Calu3 (cell line): ENCODE measurements at regions of chr12 and their contacts with region 1.

Region 1: GRCh38 chr12:19800884-19801283 is 361.6 kb downstream of the AEBP2 start:
- DNase-seq: no peak
- H3K4me3 Mint-ChIP-seq: no peak overlapping the region
- H3K27ac Mint-ChIP-seq: peak overlapping the region; percentile 63
- H3K4me1 Mint-ChIP-seq: peaks cover 26% of the 10 kb centered on the region
- H3K27me3 Mint-ChIP-seq: no peaks in the 10 kb centered on the region
- CTCF ChIP-seq: no peak

Region 2: DNA sequence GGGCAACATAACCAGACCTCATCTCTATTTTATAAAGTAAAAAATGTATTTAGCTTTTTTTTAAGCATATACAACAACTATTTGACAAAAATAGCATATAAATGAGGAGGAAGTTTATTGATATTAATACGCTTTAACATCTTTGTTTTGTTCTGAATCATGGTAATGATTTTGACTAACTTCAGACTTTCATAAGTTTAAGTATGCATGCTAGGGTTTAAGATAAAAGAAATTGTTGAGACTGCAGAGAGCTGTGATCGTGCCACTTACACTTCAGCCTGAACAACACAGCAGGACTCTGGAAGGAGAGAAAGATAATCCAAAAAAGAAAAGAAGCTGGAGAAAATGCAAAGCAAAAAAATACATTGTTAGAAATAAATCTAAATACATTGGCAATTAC is 449.5 kb before region 1 on chr12:
- CTCF ChIA-PET with region 1: no interaction called
- intact Hi-C with region 1: no loop called
- DNase-seq: no peak
- H3K4me3 Mint-ChIP-seq: no peak overlapping the region
- H3K27ac Mint-ChIP-seq: no peak overlapping the region
- H3K4me1 Mint-ChIP-seq: no peaks in the 10 kb centered on the region
- H3K27me3 Mint-ChIP-seq: no peaks in the 10 kb centered on the region
- CTCF ChIP-seq: no peak

Region 3: DNA sequence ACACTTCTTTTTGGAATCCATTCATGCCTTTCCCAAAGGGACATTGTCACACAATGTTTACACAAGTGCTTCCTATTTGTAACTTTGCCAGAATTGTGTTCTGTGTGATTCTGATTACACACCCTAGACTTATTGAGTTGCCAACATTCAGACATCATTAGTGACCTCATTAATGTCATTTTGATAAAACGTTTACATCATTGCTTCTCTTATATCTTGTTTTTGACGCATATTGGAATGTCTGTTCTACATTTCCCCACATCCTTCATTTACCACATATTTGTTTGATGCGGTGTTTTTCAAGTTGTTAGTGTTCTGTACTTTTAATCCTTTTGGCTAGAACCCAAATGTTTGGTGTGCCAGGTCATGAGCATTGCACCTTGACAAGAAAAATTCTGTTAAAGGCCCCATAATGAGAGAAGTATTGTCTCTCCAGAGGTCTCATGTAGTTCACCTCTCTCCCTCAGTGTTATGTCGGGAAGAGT is 56.1 kb before region 1 on chr12:
- CTCF ChIA-PET with region 1: interaction called, 3 read pairs
- intact Hi-C with region 1: loop called (anchors 5 kb)
- DNase-seq: peak; percentile 32
- H3K4me3 Mint-ChIP-seq: no peak overlapping the region
- H3K27ac Mint-ChIP-seq: peak overlapping the region; percentile 49
- H3K4me1 Mint-ChIP-seq: peaks cover 39% of the 10 kb centered on the region
- H3K27me3 Mint-ChIP-seq: no peaks in the 10 kb centered on the region
- CTCF ChIP-seq: no peak

Region 4: GRCh38 chr12:19893514-19893913 is 92.6 kb after region 1 on chr12:
- CTCF ChIA-PET with region 1: no interaction called
- intact Hi-C with region 1: no loop called
- DNase-seq: no peak
- H3K4me3 Mint-ChIP-seq: no peak overlapping the region
- H3K27ac Mint-ChIP-seq: no peak overlapping the region
- H3K4me1 Mint-ChIP-seq: peaks cover 16% of the 10 kb centered on the region
- H3K27me3 Mint-ChIP-seq: no peaks in the 10 kb centered on the region
- CTCF ChIP-seq: no peak

Region 5: DNA sequence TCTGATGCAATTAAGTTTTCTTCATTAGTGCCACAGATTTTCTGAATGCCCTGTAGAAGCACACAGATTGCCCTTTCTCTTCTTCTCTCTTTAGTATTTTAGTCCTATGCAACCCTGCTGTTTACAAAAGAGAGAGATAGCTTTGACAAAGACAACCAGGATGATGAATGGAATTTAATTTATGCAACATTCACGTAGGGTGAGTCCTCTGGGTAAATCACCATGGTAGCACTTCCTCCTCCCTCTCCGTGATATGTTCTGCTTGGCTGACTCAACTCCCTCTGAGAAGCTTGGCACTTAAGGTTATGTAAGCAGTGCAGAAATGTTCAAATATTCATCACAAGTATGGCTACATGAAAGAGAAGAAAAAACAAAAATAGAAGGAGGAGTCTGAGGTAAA is 166.6 kb after region 1 on chr12:
- CTCF ChIA-PET with region 1: no interaction called
- intact Hi-C with region 1: loop called (anchors 2 kb)
- DNase-seq: peak; percentile 49
- H3K4me3 Mint-ChIP-seq: peak overlapping the region; percentile 35
- H3K27ac Mint-ChIP-seq: peak overlapping the region; percentile 95
- H3K4me1 Mint-ChIP-seq: peaks cover 47% of the 10 kb centered on the region
- H3K27me3 Mint-ChIP-seq: no peaks in the 10 kb centered on the region
- CTCF ChIP-seq: no peak